ENCODE measurements at regions of chr7 and their contacts with region 1.

Region 1: GRCh38 chr7:143240291-143241168 is 18.7 kb downstream of the TAS2R40 start:
- DNase-seq: peak; percentile 34 to 87 (median 67)
- ATAC-seq: peak; percentile 83 to 94 (median 88)
- H3K4me3 ChIP-seq: no peak overlapping the region
- H3K4me3 Mint-ChIP-seq: no peak overlapping the region
- H3K27ac ChIP-seq: no peak overlapping the region
- H3K27ac Mint-ChIP-seq: peak overlapping the region; percentile 44 to 81
- H3K4me1 ChIP-seq: peaks cover 7 to 12% of the 10 kb centered on the region in 2 experiments
- H3K4me1 Mint-ChIP-seq: peaks cover 31 to 38% (median 33%) of the 10 kb centered on the region in 3 donors
- H3K27me3 ChIP-seq: peaks cover 0 to 6% of the 10 kb centered on the region in 2 experiments
- H3K27me3 Mint-ChIP-seq: peaks cover 9% of the 10 kb centered on the region in 2 donors

Region 2: DNA sequence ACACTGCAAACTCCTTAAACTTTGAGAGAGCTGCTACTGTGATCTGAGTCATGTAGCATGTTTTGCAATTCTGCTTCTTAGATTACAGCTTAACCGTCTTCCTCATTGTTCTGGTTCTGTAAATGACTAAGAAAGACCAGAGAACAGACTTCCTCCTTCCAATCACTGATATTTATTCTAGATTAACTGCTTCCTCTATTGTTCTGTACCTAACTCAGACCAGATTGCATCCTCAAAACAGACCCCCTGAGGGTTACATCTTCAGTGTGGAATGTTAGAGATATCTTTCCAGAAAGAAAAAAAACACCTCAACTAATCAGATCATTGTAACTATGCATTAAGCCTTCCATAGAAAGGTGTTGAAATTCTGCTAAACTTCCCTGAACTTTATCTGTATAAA is 114.4 kb before region 1 on chr7:
- CTCF ChIA-PET with region 1: no interaction called
- POLR2A ChIA-PET with region 1: no interaction called
- DNase-seq: no peak
- ATAC-seq: no peak
- H3K4me3 ChIP-seq: no peak overlapping the region
- H3K4me3 Mint-ChIP-seq: no peak overlapping the region
- H3K27ac ChIP-seq: no peak overlapping the region
- H3K27ac Mint-ChIP-seq: no peak overlapping the region
- H3K4me1 ChIP-seq: no peaks in the 10 kb centered on the region
- H3K4me1 Mint-ChIP-seq: no peaks in the 10 kb centered on the region
- H3K27me3 ChIP-seq: peaks cover 0 to 6% of the 10 kb centered on the region in 2 experiments
- H3K27me3 Mint-ChIP-seq: peaks cover 13 to 22% of the 10 kb centered on the region in 2 donors

Region 3: GRCh38 chr7:143214789-143215679 is 25.5 kb before region 1 on chr7:
- CTCF ChIA-PET with region 1: interaction called, 6 to 11 read pairs
- POLR2A ChIA-PET with region 1: interaction called in 1 of 2 experiments, 3 read pairs
- DNase-seq: peak in 34 of 35 experiments; percentile 26 to 89 (median 51)
- ATAC-seq: peak; percentile 77 to 90 (median 84)
- H3K4me3 ChIP-seq: no peak overlapping the region
- H3K4me3 Mint-ChIP-seq: no peak overlapping the region
- H3K27ac ChIP-seq: no peak overlapping the region
- H3K27ac Mint-ChIP-seq: no peak overlapping the region
- H3K4me1 ChIP-seq: no peaks in the 10 kb centered on the region
- H3K4me1 Mint-ChIP-seq: no peaks in the 10 kb centered on the region
- H3K27me3 ChIP-seq: peaks cover 0 to 5% of the 10 kb centered on the region in 2 experiments
- H3K27me3 Mint-ChIP-seq: peaks cover 3 to 9% of the 10 kb centered on the region in 2 donors

Region 4: DNA sequence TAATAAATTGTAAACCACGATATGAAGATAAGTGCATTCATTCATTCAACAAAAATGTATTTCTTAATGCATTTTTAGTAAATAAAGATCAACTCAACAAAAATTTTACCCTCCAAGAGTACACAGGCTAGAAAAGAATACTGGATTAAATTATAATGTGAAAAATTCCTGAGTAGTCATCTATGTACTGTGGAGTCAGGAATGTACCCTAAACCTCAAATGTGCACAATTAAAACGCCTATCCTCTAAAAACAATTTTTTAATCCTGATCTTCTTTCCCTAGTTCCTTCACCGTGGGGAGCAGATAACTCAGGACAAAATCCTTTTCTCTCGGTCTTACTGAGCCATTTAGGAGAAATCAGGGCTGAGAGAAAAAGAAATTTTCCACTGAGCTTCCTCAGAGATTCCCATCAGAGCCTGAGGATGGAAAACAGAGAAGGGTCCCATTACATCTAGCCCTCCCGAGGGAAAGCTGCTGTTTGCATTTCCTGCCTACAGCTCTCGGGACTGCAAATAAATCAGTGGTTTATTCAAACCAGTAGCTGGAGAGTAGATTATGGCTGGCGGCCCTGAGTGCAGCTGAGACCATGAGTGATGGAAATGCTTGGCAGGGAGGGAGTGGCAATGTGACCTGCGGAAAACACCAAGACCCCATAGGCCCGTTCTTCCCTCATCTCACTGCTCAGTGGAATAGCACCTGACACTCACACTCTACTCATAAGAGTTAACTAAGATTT is 11.3 kb before region 1 on chr7:
- CTCF ChIA-PET with region 1: interaction called, 5 to 11 read pairs
- POLR2A ChIA-PET with region 1: no interaction called
- DNase-seq: no peak
- ATAC-seq: no peak
- H3K4me3 ChIP-seq: no peak overlapping the region
- H3K4me3 Mint-ChIP-seq: no peak overlapping the region
- H3K27ac ChIP-seq: no peak overlapping the region
- H3K27ac Mint-ChIP-seq: no peak overlapping the region
- H3K4me1 ChIP-seq: no peaks in the 10 kb centered on the region
- H3K4me1 Mint-ChIP-seq: no peaks in the 10 kb centered on the region
- H3K27me3 ChIP-seq: no peaks in the 10 kb centered on the region
- H3K27me3 Mint-ChIP-seq: peaks cover 0 to 1% of the 10 kb centered on the region in 2 donors

Region 5: DNA sequence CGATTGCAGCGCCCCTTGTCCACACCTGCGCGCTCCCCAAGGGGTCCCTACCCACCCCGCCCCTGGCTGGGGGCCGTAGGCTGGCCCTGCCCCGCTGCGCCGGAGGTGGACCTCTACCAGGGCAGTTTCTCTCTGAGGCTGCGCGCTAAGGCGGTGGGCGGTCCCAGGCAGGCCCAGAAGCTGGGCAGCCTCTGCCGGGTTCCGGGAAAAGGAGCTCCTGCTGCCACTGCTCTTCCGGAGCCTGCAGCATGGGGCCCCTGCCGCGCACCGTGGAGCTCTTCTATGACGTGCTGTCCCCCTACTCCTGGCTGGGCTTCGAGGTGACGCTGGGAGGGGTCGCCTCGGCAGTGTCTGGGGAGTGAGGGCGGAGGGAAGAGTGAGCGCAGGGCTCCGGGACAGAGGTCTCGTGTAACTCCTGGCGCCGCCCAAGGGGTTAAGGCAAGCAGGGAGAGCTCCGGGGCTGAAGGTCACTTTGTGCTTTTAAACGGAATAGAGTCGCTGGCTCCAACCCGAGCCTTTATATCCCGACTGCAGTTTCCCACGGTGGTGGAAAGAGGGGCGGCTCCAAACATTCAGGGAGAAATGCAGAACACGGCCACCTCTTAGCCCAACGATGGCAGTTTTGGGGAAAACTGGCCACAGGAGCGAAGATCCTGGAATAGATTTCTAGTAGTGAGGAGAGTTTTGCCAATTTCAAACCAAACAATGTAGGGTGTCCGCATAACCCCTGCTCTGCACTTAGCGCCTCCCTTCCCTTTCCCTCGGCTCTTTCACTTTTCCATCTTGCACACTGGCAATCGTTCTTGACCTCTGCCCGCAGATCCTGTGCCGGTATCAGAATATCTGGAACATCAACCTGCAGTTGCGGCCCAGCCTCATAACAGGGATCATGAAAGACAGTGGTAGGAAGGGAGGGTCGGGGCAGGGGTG is 23.0 kb after region 1 on chr7 and contains the start of gene GSTK1:
- CTCF ChIA-PET with region 1: interaction called, 8 to 15 read pairs
- POLR2A ChIA-PET with region 1: no interaction called
- DNase-seq: peak; percentile 52 to 83 (median 71)
- ATAC-seq: peak; percentile 95 to 97 (median 97)
- H3K4me3 ChIP-seq: peak within 1 kb of the TSS; percentile 84 to 98
- H3K4me3 Mint-ChIP-seq: peak within 1 kb of the TSS; percentile 95 to 99 (median 96)
- H3K27ac ChIP-seq: peak within 1 kb of the TSS; percentile 77
- H3K27ac Mint-ChIP-seq: peak within 1 kb of the TSS; percentile 95 to 97
- H3K4me1 ChIP-seq: peaks cover 11 to 35% of the 10 kb centered on the region in 2 experiments
- H3K4me1 Mint-ChIP-seq: peaks cover 64 to 75% (median 66%) of the 10 kb centered on the region in 3 donors
- H3K27me3 ChIP-seq: no peaks in the 10 kb centered on the region
- H3K27me3 Mint-ChIP-seq: no peaks in the 10 kb centered on the region
- total RNA-seq, gene GSTK1: 347 to 524 (median 406) TPM

Region 6: DNA sequence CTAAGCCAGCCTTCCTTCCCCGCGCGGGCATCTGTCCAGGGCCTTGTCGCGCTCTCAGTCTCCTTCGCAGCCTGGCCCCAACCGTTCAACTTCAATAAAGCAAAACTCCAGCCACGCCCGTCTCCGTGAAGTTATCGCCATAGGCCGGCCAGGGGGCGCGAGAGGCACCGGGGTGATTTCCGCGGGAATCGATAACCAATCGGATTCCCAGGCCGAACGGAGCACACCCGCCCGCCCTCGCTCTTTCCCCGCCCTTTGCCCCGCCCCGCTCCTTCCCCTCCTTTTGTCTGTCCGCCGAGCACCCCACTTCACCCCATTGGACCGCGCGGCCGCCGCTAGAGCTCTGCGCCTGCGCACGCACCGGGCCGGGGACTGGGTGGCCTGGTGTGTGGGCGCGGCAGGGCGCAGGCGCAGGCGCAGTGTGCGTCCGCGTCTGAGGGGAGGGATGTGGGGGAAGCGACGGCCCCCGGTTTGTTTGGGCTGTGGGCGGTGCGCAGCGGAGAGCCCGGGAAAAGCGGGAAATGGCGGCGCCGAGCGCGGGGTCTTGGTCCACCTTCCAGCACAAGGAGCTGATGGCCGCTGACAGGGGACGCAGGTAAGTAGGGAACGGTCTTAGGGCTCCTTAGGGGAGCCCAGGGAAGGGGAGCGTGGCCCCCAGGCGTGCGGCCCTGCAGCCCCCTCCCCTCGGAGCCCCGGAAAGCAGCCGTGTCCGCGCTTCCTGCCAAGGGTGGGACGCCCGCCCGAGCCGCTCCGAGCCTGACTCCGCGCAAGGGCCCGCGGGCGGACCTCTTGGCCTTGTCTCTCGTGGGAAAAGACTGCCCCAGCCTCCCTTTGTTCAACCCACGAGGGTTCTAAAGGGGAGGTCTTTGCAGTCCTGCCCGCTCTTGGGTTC is 47.7 kb after region 1 on chr7 and contains the start of gene CASP2:
- CTCF ChIA-PET with region 1: interaction called, 26 to 27 read pairs
- POLR2A ChIA-PET with region 1: no interaction called
- DNase-seq: peak; percentile 96 to 100 (median 98)
- ATAC-seq: peak; percentile 93 to 96 (median 93)
- H3K4me3 ChIP-seq: peak within 1 kb of the TSS; percentile 82 to 96
- H3K4me3 Mint-ChIP-seq: peak within 1 kb of the TSS; percentile 96 to 97 (median 97)
- H3K27ac ChIP-seq: peak within 1 kb of the TSS; percentile 81
- H3K27ac Mint-ChIP-seq: peak within 1 kb of the TSS; percentile 93 to 94
- H3K4me1 ChIP-seq: peaks cover 13 to 37% of the 10 kb centered on the region in 2 experiments
- H3K4me1 Mint-ChIP-seq: peaks cover 55 to 66% (median 58%) of the 10 kb centered on the region in 3 donors
- H3K27me3 ChIP-seq: no peaks in the 10 kb centered on the region
- H3K27me3 Mint-ChIP-seq: no peaks in the 10 kb centered on the region
- total RNA-seq, gene CASP2: 43.4 to 83.6 (median 73.7) TPM

Region 7: GRCh38 chr7:143305423-143306070 is 65.0 kb after region 1 on chr7:
- CTCF ChIA-PET with region 1: interaction called, 35 to 98 read pairs
- POLR2A ChIA-PET with region 1: no interaction called
- DNase-seq: peak; percentile 30 to 76 (median 60)
- ATAC-seq: peak; percentile 65 to 81 (median 74)
- H3K4me3 ChIP-seq: no peak overlapping the region
- H3K4me3 Mint-ChIP-seq: no peak overlapping the region
- H3K27ac ChIP-seq: no peak overlapping the region
- H3K27ac Mint-ChIP-seq: peak overlapping the region; percentile 68 to 76
- H3K4me1 ChIP-seq: peaks cover 4 to 12% of the 10 kb centered on the region in 2 experiments
- H3K4me1 Mint-ChIP-seq: peaks cover 28 to 34% (median 32%) of the 10 kb centered on the region in 3 donors
- H3K27me3 ChIP-seq: no peaks in the 10 kb centered on the region
- H3K27me3 Mint-ChIP-seq: no peaks in the 10 kb centered on the region

Region 8: GRCh38 chr7:143416565-143417149 is 176.1 kb after region 1 on chr7:
- CTCF ChIA-PET with region 1: interaction called, 31 to 35 read pairs
- POLR2A ChIA-PET with region 1: no interaction called
- DNase-seq: peak in 2 of 35 experiments; percentile 19 to 75
- ATAC-seq: peak in 2 of 4 experiments; percentile 44 to 52
- H3K4me3 ChIP-seq: no peak overlapping the region
- H3K4me3 Mint-ChIP-seq: no peak overlapping the region
- H3K27ac ChIP-seq: no peak overlapping the region
- H3K27ac Mint-ChIP-seq: no peak overlapping the region
- H3K4me1 ChIP-seq: peaks cover 0 to 5% of the 10 kb centered on the region in 2 experiments
- H3K4me1 Mint-ChIP-seq: peaks cover 19 to 55% (median 21%) of the 10 kb centered on the region in 3 donors
- H3K27me3 ChIP-seq: no peaks in the 10 kb centered on the region
- H3K27me3 Mint-ChIP-seq: peaks cover 0 to 2% of the 10 kb centered on the region in 2 donors

Measured in T-cell (primary cell).